ENCODE measurements at regions of chr12 and their contacts with region 1.

Region 1: GRCh38 chr12:52582971-52583456 is 9.4 kb upstream of the KRT74 start:
- H3K4me3 Mint-ChIP-seq: no peak overlapping the region
- H3K27ac Mint-ChIP-seq: no peak overlapping the region
- H3K4me1 Mint-ChIP-seq: peaks cover 8% of the 10 kb centered on the region
- H3K27me3 Mint-ChIP-seq: peaks cover 17% of the 10 kb centered on the region

Region 2: GRCh38 chr12:52351196-52352059 is 231.6 kb before region 1 on chr12:
- intact Hi-C with region 1: no loop called
- H3K4me3 Mint-ChIP-seq: no peak overlapping the region
- H3K27ac Mint-ChIP-seq: no peak overlapping the region
- H3K4me1 Mint-ChIP-seq: no peaks in the 10 kb centered on the region
- H3K27me3 Mint-ChIP-seq: peaks cover 21% of the 10 kb centered on the region

Region 3: GRCh38 chr12:52372216-52373154 is 210.5 kb before region 1 on chr12:
- intact Hi-C with region 1: loop called (anchors 10 kb)
- H3K4me3 Mint-ChIP-seq: no peak overlapping the region
- H3K27ac Mint-ChIP-seq: no peak overlapping the region
- H3K4me1 Mint-ChIP-seq: no peaks in the 10 kb centered on the region
- H3K27me3 Mint-ChIP-seq: peaks cover 9% of the 10 kb centered on the region

Region 4: DNA sequence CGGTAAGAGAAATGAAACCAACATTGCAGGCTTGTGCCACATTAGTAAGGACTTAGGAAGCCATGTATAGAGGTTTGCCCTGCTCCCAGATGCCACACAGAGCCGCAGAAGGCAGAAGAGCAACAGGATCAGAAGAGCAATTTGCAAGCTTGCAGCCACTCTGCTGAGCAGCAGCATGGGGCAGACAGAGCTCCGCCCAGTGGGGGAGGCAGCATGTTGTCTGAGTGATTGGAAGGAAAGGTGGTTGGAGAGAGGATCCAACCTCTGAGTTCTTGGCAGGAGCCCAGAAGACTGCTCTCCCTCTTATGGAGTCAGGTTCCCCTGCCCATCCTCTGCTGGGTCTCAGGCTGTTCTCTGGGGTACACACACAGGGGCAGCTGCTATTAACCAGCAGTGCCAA is 87.6 kb before region 1 on chr12:
- intact Hi-C with region 1: no loop called
- H3K4me3 Mint-ChIP-seq: no peak overlapping the region
- H3K27ac Mint-ChIP-seq: no peak overlapping the region
- H3K4me1 Mint-ChIP-seq: peaks cover 17% of the 10 kb centered on the region
- H3K27me3 Mint-ChIP-seq: peaks cover 19% of the 10 kb centered on the region

Region 5: DNA sequence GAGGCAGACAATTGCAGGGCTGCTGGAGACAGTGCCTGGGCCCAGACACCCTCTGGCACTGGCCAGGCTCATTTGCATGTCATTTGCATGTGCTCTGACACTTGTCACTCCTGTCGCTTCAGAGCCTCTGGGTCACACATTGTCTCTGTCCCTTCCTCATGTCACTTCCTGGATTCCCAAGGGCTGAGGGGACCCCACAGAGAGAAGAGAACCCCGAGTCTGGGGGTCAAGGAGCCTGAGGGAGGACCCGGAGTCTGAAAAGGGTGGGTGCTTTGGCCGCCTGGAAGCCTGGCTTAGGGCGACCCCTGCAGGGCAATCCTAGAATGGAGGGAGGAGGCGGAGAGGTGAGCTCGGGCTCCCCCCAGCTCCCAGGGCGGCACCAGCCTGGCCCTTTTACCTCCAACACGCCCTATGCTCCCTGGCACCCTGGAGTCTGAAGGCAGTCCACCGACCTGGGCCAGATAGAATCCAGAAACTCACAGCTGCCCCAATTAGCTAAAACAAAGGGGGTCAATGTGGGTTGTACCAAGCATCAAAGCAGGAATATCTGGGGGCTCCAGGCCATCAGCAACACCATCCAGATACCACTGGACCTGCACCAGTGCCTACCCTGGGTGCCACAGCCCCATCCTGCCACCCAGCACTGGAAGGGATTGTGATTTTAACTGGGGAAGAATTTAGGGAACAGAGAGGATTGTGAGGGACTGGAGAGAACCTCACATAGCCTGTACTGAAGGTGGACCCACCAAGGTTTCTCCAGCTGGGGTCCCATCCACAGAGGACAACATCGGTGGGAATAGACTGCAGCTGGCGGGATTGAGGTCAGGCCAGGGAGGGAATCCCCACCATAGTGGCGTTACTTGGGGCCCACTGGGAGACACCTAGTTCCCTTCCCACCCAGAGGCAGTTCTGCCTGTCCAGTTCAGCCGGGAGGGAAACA is 287.6 kb after region 1 on chr12:
- intact Hi-C with region 1: loop called (anchors 2 kb)
- H3K4me3 Mint-ChIP-seq: no peak overlapping the region
- H3K27ac Mint-ChIP-seq: peak overlapping the region; percentile 90
- H3K4me1 Mint-ChIP-seq: peaks cover 83% of the 10 kb centered on the region
- H3K27me3 Mint-ChIP-seq: peaks cover 2% of the 10 kb centered on the region

Region 6: GRCh38 chr12:52879394-52880351 is 296.7 kb after region 1 on chr12:
- intact Hi-C with region 1: loop called (anchors 1 kb)
- H3K4me3 Mint-ChIP-seq: peak overlapping the region; percentile 67
- H3K27ac Mint-ChIP-seq: peak overlapping the region; percentile 67
- H3K4me1 Mint-ChIP-seq: peaks cover 31% of the 10 kb centered on the region
- H3K27me3 Mint-ChIP-seq: peaks cover 22% of the 10 kb centered on the region